ENCODE measurements at regions of chr2 and their contacts with region 1.

Region 1: DNA sequence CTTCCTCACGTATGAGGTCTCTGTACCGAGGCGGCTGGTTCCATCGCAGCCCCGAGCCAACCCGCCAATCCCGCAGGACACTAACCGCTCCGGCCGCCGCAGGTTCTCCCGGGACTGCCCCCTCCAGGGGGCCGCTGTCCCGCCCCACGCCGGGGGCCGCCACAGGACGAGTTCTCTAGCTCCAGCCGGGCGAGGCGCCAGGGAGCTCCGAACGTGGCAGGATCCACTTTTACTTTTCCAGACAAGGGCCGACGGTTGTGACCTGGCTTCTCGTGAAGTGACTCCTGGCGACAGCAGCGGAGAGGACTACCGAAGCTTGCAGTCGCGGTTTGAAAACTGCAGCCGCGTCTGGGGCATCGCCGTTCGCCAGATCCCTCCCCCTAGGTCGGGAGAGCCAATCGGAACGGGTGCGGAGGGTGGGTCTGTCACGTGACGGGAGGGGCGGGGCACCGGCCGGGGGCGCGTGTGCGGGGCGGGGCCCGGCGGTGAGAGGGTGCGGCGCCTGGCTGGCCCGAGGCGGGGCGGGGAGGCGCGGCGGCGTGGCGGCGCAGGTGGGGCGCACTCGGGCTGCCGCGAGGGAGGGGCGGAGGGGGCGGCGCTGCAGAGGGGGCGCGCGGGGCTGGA is at the start of gene STK17B:
- DNase-seq: peak; percentile 96
- H3K4me3 Mint-ChIP-seq: peak within 1 kb of the TSS; percentile 99
- H3K27ac Mint-ChIP-seq: peak within 1 kb of the TSS; percentile 98
- H3K4me1 Mint-ChIP-seq: peaks cover 15% of the 10 kb centered on the region
- H3K27me3 Mint-ChIP-seq: no peaks in the 10 kb centered on the region
- CTCF ChIP-seq: no peak
- total RNA-seq, gene STK17B: 17.1 and 20.7 TPM in 2 replicates

Region 2: GRCh38 chr2:195595825-195596224 is 575.5 kb before region 1 on chr2:
- CTCF ChIA-PET with region 1: no interaction called
- POLR2A ChIA-PET with region 1: no interaction called
- intact Hi-C with region 1: no loop called
- DNase-seq: no peak
- H3K4me3 Mint-ChIP-seq: no peak overlapping the region
- H3K27ac Mint-ChIP-seq: no peak overlapping the region
- H3K4me1 Mint-ChIP-seq: peaks cover under 1% of the 10 kb centered on the region
- H3K27me3 Mint-ChIP-seq: no peaks in the 10 kb centered on the region
- CTCF ChIP-seq: no peak

Region 3: GRCh38 chr2:196131384-196131937 is 39.9 kb before region 1 on chr2:
- CTCF ChIA-PET with region 1: interaction called, 4 read pairs
- POLR2A ChIA-PET with region 1: no interaction called
- intact Hi-C with region 1: loop called (anchors 1 kb)
- DNase-seq: peak; percentile 73
- H3K4me3 Mint-ChIP-seq: no peak overlapping the region
- H3K27ac Mint-ChIP-seq: no peak overlapping the region
- H3K4me1 Mint-ChIP-seq: no peaks in the 10 kb centered on the region
- H3K27me3 Mint-ChIP-seq: no peaks in the 10 kb centered on the region
- CTCF ChIP-seq: peak; percentile 68

Region 4: DNA sequence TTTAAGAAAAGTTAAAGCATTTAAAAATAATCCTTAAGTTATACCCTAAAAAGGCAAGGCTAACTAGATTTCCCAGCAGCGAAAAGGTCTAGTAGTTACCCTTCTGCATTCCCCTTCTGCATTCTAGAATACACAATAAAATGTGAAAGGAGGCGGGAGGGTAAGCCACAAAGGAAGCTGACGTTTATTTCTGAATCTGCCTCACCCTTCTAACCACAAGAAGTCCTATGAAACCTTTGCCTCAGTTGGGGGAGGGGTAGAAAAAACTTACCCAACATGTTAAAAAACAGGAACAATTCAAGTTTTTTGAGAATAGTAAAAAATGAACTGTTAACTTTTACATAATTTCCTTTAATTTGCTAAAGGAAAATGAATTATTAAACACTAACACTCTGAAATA is 11.3 kb before region 1 on chr2:
- CTCF ChIA-PET with region 1: interaction called, 3 read pairs
- POLR2A ChIA-PET with region 1: interaction called, 50 read pairs
- intact Hi-C with region 1: no loop called
- DNase-seq: peak; percentile 88
- H3K4me3 Mint-ChIP-seq: peak overlapping the region; percentile 14
- H3K27ac Mint-ChIP-seq: peak overlapping the region; percentile 27
- H3K4me1 Mint-ChIP-seq: peaks cover 2% of the 10 kb centered on the region
- H3K27me3 Mint-ChIP-seq: no peaks in the 10 kb centered on the region
- CTCF ChIP-seq: no peak

Region 5: GRCh38 chr2:196233021-196233804 is 61.9 kb after region 1 on chr2:
- CTCF ChIA-PET with region 1: interaction called, 7 read pairs
- POLR2A ChIA-PET with region 1: interaction called, 60 read pairs
- intact Hi-C with region 1: loop called (anchors 2 kb)
- DNase-seq: peak; percentile 87
- H3K4me3 Mint-ChIP-seq: peak overlapping the region; percentile 39
- H3K27ac Mint-ChIP-seq: peak overlapping the region; percentile 85
- H3K4me1 Mint-ChIP-seq: peaks cover 27% of the 10 kb centered on the region
- H3K27me3 Mint-ChIP-seq: no peaks in the 10 kb centered on the region
- CTCF ChIP-seq: no peak

Region 6: DNA sequence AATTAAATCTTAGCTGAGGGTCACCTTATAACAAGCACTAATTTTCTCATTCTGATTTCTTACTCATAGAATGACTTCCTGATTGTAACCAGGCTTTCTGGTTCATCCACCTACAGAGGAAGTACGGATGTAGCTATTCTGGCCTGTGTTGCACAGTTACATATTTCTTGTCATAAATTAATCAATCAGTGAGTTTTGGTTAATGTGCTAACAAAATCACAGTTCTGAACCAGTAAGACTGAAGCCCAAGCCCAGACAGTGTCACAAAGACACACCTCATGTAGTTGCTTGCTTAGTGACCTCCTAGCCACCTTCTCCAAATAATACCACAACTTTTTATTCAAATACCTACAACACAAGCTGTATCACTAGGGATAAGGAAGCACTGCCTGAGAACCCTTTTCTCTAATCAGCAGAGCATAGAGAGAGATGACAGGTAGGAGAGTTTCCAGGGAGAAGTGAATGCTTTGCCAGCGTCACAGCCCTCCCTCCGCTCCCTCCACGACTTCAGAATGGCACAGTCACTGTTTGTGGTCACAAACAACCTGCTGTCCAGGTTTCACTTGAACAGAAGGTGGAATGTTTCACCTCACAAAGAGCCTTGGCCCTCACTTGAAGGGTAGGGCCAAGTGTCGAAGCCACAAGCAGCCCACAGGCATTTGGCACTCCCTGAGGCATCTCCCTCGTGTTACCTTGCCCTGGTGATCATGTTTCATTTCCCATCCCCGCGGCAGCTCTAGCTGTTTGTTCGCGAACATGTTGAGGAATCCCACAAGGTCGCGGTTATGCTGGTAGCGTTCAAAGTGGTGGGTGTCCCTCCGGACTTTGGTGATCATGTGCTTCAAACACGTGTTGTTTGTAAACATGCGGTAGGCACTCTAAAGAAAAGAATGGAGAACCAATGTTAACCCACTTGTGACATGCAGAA is 120.8 kb after region 1 on chr2:
- CTCF ChIA-PET with region 1: interaction called, 3 read pairs
- POLR2A ChIA-PET with region 1: interaction called, 11 read pairs
- intact Hi-C with region 1: loop called (anchors 5 kb)
- DNase-seq: peak; percentile 87
- H3K4me3 Mint-ChIP-seq: peak overlapping the region; percentile 4
- H3K27ac Mint-ChIP-seq: peak overlapping the region; percentile 31
- H3K4me1 Mint-ChIP-seq: peaks cover 36% of the 10 kb centered on the region
- H3K27me3 Mint-ChIP-seq: no peaks in the 10 kb centered on the region
- CTCF ChIP-seq: no peak

Measured in MCF 10A (cell line).